K562 (cell line): ENCODE measurements at regions of chr1 and their contacts with region 1.

Region 1: GRCh38 chr1:62841587-62842169 is 57.7 kb downstream of the ATG4C start:
- DNase-seq: peak; percentile 52 to 71 (median 53)
- ATAC-seq: peak; percentile 87
- H3K4me3 ChIP-seq: no peak overlapping the region
- H3K27ac ChIP-seq: no peak overlapping the region
- H3K4me1 ChIP-seq: no peaks in the 10 kb centered on the region
- H3K27me3 ChIP-seq: no peaks in the 10 kb centered on the region
- CTCF ChIP-seq: peak; percentile 54 to 72 (median 56); a peak in 5 of 6 replicates
- EP300 ChIP-seq: no peak
- POLR2A ChIP-seq: no peak
- RAD21 ChIP-seq: peak; percentile 50 to 65

Region 2: DNA sequence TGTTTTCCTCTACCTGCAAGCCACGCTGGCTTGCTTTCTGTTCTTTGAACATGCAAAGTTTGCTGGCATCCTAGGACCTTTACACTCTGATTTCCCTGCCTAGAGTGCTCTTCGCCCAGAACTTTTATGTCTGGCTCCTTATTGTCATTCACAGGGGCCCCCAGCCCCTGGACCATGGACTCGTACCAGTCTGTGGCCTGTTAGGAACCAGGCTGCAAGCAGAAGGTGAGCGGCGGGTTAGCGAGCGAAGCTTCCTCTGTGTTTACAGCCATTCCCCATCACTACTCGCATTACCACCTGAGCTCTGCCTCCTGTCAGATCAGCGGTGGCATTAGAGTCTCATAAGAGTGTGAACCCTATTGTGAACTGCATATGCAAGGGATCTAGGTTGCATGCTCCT is 15.3 kb after region 1 on chr1:
- CTCF ChIA-PET with region 1: no interaction called
- POLR2A ChIA-PET with region 1: no interaction called
- in situ Hi-C with region 1: no loop called
- intact Hi-C with region 1: no loop called
- DNase-seq: no peak
- ATAC-seq: no peak
- H3K4me3 ChIP-seq: no peak overlapping the region
- H3K27ac ChIP-seq: no peak overlapping the region
- H3K4me1 ChIP-seq: no peaks in the 10 kb centered on the region
- H3K27me3 ChIP-seq: no peaks in the 10 kb centered on the region
- CTCF ChIP-seq: no peak
- EP300 ChIP-seq: no peak
- POLR2A ChIP-seq: no peak
- RAD21 ChIP-seq: no peak

Region 3: DNA sequence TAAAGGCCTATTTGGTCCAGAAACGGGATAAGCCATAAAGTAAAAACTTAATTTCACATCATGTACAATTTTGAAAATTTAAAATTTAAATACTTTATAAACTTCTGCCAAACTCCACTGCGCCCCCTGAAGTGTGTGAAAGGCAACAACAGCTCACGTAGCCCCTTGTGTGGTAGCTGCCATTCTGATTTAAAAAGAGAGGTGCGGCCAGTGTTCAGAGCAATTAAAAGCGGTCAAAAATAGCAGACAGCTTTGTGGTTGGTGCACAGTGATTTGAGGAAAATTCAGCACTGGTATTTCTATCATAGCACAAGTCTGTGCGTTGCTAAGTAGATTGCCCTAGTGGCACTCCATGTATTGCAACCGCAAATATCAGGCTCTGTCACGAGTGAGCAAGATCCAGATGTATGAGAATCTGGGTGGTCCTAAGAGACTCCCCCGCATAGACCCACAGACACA is 64.8 kb after region 1 on chr1:
- CTCF ChIA-PET with region 1: no interaction called
- POLR2A ChIA-PET with region 1: no interaction called
- in situ Hi-C with region 1: no loop called
- intact Hi-C with region 1: loop called (anchors 5 kb)
- DNase-seq: peak; percentile 34 to 41 (median 38)
- ATAC-seq: peak; percentile 89
- H3K4me3 ChIP-seq: no peak overlapping the region
- H3K27ac ChIP-seq: no peak overlapping the region
- H3K4me1 ChIP-seq: no peaks in the 10 kb centered on the region
- H3K27me3 ChIP-seq: peaks cover 12 to 24% of the 10 kb centered on the region in 2 experiments; a peak in 4 of 5 replicates
- CTCF ChIP-seq: peak; percentile 68 to 88 (median 73)
- EP300 ChIP-seq: no peak
- POLR2A ChIP-seq: no peak
- RAD21 ChIP-seq: 0 out of 4 replicates have a peak, but pooled peaks of 1 of the 2 experiments have one; percentile 21

Region 4: DNA sequence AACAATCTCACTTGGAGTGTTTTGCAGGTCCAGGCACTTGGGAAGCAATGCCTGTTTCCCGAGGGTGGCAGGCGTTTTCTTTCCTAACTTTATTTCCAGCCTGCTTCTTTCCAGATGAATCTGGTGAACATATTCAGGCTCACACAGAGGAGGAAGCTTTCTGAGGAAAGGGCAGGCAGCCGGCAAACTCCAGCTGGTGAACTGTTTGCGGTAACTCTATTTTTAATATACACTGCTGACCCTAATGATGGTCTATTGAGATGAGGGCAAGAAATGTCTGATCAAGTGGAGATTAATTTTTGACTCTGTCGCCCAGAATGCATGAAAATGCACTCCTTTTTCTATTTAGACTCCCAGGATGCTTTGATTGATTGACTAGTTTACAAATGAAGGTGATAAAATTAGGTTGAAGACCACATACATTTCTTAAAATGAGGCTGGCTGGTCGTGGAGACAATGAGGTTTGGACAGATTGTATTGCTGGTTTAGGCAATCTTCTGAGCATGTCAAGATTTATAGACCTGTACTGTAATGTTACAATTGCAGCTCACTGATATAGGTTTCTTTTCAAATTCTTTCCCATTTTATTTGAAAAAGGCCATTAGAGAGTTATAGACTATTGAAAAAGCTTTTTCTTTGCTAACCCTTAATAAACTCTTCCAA is 96.1 kb after region 1 on chr1:
- CTCF ChIA-PET with region 1: no interaction called
- POLR2A ChIA-PET with region 1: no interaction called
- in situ Hi-C with region 1: no loop called
- intact Hi-C with region 1: no loop called
- DNase-seq: no peak
- ATAC-seq: no peak
- H3K4me3 ChIP-seq: no peak overlapping the region
- H3K27ac ChIP-seq: no peak overlapping the region
- H3K4me1 ChIP-seq: no peaks in the 10 kb centered on the region
- H3K27me3 ChIP-seq: peaks cover 2 to 18% of the 10 kb centered on the region in 2 experiments; a peak in 3 of 5 replicates
- CTCF ChIP-seq: no peak
- EP300 ChIP-seq: no peak
- POLR2A ChIP-seq: no peak
- RAD21 ChIP-seq: no peak

Region 5: GRCh38 chr1:62989497-62989896 is 147.8 kb after region 1 on chr1:
- CTCF ChIA-PET with region 1: no interaction called
- POLR2A ChIA-PET with region 1: no interaction called
- in situ Hi-C with region 1: no loop called
- intact Hi-C with region 1: loop called (anchors 5 kb)
- DNase-seq: peak in 1 of 4 experiments; percentile 14
- ATAC-seq: peak; percentile 59
- H3K4me3 ChIP-seq: no peak overlapping the region
- H3K27ac ChIP-seq: no peak overlapping the region
- H3K4me1 ChIP-seq: no peaks in the 10 kb centered on the region
- H3K27me3 ChIP-seq: peaks cover 4 to 10% of the 10 kb centered on the region in 2 experiments; a peak in 4 of 5 replicates
- CTCF ChIP-seq: peak; percentile 44 to 82 (median 66)
- EP300 ChIP-seq: no peak
- POLR2A ChIP-seq: no peak
- RAD21 ChIP-seq: peak in 1 of 2 experiments; percentile 39; a peak in 2 of 4 replicates

Region 6: DNA sequence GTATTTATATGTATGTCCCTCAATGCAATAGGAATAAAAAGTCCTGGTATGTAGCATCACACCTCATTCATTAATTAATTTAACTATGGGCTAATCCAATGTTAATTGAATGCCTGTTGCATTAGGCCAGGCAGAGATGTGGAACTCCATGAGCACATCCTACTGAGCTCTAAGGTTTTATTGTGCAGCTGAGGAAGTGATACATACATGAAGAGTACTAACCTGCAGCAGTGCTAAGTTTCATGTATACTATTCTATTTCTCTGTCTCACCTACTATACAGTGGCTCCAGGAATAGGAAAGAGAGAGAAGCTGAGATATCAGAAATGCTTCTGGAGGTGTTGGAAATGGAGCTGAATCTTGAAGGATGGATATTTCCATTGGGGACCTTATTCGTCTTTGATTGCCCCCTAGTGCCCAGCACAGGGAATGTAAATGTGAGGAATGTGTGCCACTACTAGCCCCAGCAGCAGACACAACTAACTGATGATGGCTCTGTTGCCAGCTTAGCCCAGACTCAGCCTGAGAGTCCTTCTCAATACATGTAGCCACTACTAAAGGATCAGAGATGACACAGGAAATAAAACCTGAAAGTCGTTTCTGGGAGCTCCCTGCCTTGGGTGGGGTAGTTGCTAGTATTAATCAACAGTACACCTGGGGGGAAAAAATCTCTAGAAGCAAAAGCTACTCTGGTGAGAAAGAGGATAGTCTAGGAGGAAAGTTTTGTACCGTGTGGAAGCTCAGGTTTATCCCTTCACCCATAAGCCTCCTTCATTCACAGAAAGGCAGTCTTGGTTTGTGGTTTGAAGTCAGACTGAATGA is 307.4 kb after region 1 on chr1:
- CTCF ChIA-PET with region 1: no interaction called
- POLR2A ChIA-PET with region 1: no interaction called
- in situ Hi-C with region 1: no loop called
- intact Hi-C with region 1: loop called (anchors 2 kb)
- DNase-seq: peak; percentile 22 to 34 (median 28)
- ATAC-seq: peak; percentile 78
- H3K4me3 ChIP-seq: no peak overlapping the region
- H3K27ac ChIP-seq: no peak overlapping the region
- H3K4me1 ChIP-seq: no peaks in the 10 kb centered on the region
- H3K27me3 ChIP-seq: no peaks in the 10 kb centered on the region
- CTCF ChIP-seq: peak; percentile 48 to 66 (median 61)
- EP300 ChIP-seq: no peak
- POLR2A ChIP-seq: no peak
- RAD21 ChIP-seq: peak in 1 of 2 experiments; percentile 68; a peak in 2 of 4 replicates